ENCODE measurements at regions of chr5 and their contacts with region 1.

Region 1: DNA sequence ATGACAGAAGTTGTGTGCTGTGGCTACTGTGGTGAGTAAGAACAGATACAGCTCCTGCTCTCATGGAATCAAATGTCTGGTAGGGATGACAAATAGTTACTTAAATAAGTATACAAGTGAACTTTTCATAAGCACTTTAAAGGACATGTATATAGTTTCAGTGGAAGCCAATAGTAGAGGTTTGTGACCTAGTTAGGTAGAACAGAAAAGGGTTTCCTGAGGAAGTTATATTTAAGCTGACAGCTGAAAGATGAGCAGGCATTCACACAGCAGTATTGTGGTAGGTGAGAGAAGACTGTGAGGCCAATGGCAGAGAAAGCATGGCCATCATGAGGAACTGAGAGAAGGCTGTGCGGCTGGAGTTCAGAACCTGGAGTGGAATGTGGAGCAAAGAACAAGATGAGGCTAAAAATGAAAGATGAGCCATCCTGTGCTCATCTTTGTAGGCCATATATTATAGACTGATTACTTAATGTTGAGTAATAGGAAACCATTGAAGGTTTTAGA is 15.4 kb downstream of the FAM174A start:
- DNase-seq: peak; percentile 72
- ATAC-seq: peak; percentile 96
- H3K4me3 ChIP-seq: no peak overlapping the region
- H3K27ac ChIP-seq: peak overlapping the region; percentile 31; the same call in 1 of the 2 replicates
- H3K4me1 ChIP-seq: peaks cover 8% of the 10 kb centered on the region
- H3K27me3 ChIP-seq: no peaks in the 10 kb centered on the region
- CTCF ChIP-seq: no peak
- EP300 ChIP-seq: no peak
- POLR2A ChIP-seq: no peak
- RAD21 ChIP-seq: no peak

Region 2: GRCh38 chr5:100306000-100306399 is 244.6 kb before region 1 on chr5:
- CTCF ChIA-PET with region 1: no interaction called
- POLR2A ChIA-PET with region 1: no interaction called
- RAD21 ChIA-PET with region 1: no interaction called
- SMC1A ChIA-PET with region 1: no interaction called
- in situ Hi-C with region 1: no loop called
- intact Hi-C with region 1: no loop called
- DNase-seq: no peak
- ATAC-seq: no peak
- H3K4me3 ChIP-seq: no peak overlapping the region
- H3K27ac ChIP-seq: no peak overlapping the region
- H3K4me1 ChIP-seq: no peaks in the 10 kb centered on the region
- H3K27me3 ChIP-seq: no peaks in the 10 kb centered on the region
- CTCF ChIP-seq: no peak
- EP300 ChIP-seq: no peak
- POLR2A ChIP-seq: no peak
- RAD21 ChIP-seq: no peak

Region 3: GRCh38 chr5:100535060-100536005 is 15.3 kb before region 1 on chr5 and contains the start of gene FAM174A:
- CTCF ChIA-PET with region 1: interaction called, 5 read pairs
- POLR2A ChIA-PET with region 1: interaction called, 3 read pairs
- RAD21 ChIA-PET with region 1: interaction called, 3 read pairs
- SMC1A ChIA-PET with region 1: interaction called, 10 read pairs
- in situ Hi-C with region 1: no loop called
- intact Hi-C with region 1: no loop called
- DNase-seq: peak; percentile 94
- ATAC-seq: peak; percentile 93
- H3K4me3 ChIP-seq: peak within 1 kb of the TSS; percentile 85
- H3K27ac ChIP-seq: peak within 1 kb of the TSS; percentile 76
- H3K4me1 ChIP-seq: no peaks in the 10 kb centered on the region
- H3K27me3 ChIP-seq: no peaks in the 10 kb centered on the region
- CTCF ChIP-seq: no peak
- EP300 ChIP-seq: no peak
- POLR2A ChIP-seq: peak; percentile 72
- RAD21 ChIP-seq: no peak
- polyA plus RNA-seq, gene FAM174A: 1.4 to 4.2 TPM